GM23248 (cell line): ENCODE measurements at regions of chr2 and their contacts with region 1.

Region 1: GRCh38 chr2:13006829-13007717 is 290.3 kb downstream of the TRIB2 start:
- DNase-seq: peak; percentile 73
- H3K4me3 ChIP-seq: peak overlapping the region; percentile 26; the same call in 1 of the 2 replicates
- H3K27ac ChIP-seq: no peak overlapping the region
- H3K4me1 ChIP-seq: peaks cover 12% of the 10 kb centered on the region; the same call in 1 of the 2 replicates
- H3K27me3 ChIP-seq: no peaks in the 10 kb centered on the region

Region 2: DNA sequence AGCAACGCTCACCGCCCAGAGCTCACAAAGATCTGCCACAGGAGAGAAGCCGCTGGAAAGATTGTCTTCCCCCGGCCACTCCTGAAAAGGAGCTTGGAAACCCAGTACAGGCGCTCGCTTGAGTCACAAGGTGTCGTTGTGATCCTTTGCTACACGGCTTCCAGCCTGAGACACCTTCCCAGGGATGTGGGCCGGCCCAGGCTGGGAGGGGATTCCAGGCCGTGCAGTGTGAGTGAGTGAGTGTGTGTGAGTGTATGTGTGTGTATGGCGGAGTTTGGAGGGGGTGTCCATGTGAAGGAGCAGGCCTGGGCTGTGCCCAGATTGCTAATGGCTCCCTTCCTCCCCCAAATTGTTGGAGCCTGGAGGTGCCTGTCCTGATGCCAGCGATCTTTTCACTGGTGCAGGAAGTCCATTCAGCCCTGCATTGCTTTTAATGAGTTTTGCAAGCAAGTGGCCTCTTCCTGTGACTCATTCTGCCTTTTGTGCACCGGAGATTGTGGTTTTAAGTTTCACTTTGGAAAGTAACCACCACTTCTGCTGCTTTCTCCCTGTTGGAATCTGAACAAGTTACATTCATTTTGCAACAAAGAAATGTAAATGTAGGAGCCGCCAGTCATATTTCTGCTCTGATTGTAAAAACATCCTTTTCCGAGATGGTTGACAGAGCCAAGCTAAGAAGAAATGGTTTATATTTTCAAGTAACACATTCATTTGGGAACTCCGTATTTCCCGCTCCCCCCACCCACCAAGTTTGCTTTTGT is 1176.9 kb before region 1 on chr2:
- in situ Hi-C with region 1: loop called (anchors 25 kb)
- DNase-seq: peak; percentile 97
- H3K4me3 ChIP-seq: peak overlapping the region; percentile 67
- H3K27ac ChIP-seq: peak overlapping the region; percentile 64
- H3K4me1 ChIP-seq: peaks cover 38% of the 10 kb centered on the region
- H3K27me3 ChIP-seq: no peaks in the 10 kb centered on the region